ENCODE measurements at regions of chr6 and their contacts with region 1.

Region 1: DNA sequence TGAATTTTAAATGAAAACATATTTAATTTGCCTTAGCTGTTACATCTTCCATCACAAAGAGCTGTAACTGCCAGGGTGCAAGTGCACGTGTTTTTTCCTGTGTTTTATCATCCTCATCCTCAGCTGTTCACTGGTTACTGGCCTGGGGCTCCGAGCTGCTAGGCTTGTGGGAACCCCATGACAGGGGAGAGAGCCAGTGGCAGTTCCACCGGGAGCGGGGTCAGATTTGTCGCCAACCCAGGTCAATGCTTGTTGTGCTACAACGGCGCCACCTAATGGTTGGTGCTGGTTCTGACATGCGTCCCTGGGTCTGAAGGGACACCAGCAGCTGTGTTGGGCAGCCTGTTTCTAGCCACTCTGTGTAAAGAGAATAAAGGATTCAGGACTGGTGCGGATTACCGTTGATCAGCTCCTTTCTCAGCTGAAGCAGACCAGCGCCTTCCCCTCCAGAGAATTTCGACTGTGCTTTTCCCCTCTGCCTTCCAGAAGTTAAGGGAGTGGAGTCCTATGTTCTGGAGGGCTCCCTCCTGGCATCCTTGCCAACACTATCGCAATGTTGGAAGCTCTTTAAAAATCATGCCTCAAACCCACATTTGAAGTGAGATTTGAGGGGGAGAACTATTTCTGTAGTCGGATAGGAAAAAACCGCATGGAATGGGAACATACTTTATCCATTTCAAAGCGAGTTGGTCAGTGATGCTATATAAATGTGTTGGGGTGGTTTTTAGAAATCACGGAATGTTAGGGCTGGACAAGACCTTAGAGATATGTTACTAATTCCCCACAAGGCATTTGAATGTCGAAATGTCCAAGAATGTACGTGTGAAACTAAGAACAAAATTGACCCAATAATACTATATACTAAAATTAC is 32.1 kb downstream of the SUMO4 start:
- DNase-seq: peak; percentile 95
- H3K4me3 Mint-ChIP-seq: no peak overlapping the region
- H3K27ac Mint-ChIP-seq: peak overlapping the region; percentile 58
- H3K4me1 Mint-ChIP-seq: peaks cover 5% of the 10 kb centered on the region
- H3K27me3 Mint-ChIP-seq: no peaks in the 10 kb centered on the region

Region 2: DNA sequence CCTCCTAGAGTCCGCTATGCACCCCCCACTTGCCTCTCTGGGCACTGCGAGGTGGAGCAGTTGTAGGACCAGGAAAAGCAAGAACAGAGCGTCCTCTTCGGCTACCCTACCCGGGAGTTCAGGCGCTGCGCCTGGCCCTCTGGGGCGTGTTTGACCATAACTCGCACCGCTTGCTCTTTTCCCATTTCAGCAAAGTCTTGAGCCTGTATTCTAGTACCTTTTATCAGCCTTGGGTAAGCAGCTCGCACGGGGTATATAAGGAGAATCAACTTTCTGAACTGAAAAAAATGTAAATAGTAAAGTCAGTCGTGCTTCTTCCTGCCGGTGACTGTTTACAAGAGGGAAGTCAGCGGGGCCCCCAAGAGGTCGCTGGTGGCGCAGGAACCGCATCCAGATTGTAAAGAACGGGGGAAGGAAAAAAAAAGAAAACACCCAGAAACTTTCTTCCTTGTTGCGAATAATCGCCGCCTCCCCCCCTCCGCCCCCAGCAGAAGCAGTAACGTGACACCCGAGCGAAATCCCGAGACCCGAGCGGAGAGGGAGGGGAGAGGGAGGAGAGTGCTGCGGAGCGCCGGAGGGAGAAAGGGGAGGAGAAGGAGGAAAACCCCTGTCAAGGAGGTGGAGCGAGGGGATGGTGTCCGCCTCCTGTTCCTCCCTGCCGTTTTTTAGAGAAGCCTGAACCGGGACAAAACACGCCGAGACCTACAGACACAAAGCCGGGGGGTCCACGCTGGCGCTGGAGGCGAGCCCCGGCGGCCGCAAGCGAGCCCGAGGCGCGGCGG is 685.6 kb before region 1 on chr6 and contains the start of gene UST:
- CTCF ChIA-PET with region 1: no interaction called
- POLR2A ChIA-PET with region 1: no interaction called
- intact Hi-C with region 1: loop called (anchors 5 kb)
- DNase-seq: peak; percentile 79
- H3K4me3 Mint-ChIP-seq: peak within 1 kb of the TSS; percentile 88
- H3K27ac Mint-ChIP-seq: peak within 1 kb of the TSS; percentile 78
- H3K4me1 Mint-ChIP-seq: peaks cover 28% of the 10 kb centered on the region
- H3K27me3 Mint-ChIP-seq: peaks cover 8% of the 10 kb centered on the region
- total RNA-seq, gene UST: 3.7 to 4.9 TPM

Region 3: DNA sequence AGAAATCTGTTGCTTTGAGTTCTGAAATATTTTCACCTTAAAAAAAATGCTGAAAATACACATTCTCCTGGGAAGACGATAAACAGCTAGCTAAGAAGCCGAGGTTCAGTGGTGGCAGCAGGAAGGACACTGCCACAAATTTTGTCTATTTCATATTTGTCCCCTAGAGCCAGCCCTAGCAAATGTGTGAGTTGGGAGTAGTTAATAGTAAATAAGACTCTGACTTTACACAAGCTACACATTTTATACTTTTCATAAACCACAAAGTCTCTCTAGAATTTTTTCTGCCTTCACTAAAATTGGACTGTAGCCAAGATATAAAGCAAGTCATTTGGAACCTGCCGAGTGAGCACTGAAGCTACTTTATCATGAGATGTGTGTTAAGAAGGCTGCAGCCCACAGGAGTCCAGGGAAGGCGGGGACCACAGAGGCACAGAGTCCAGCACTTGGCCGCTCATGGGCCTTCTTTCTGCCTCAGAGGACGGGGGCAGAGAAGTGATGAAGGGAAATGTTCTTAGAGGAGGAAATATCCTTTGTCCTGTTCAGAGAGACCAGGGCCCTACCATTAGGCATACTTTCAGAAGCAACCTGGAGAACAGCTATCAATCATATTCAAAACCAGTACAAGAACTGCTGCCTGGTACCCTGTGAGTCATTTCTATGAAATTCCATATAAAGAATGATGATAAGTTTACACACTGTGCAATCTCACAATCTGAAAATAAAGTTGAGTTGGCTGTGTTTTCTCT is 356.4 kb before region 1 on chr6:
- CTCF ChIA-PET with region 1: interaction called, 29 read pairs
- POLR2A ChIA-PET with region 1: no interaction called
- intact Hi-C with region 1: no loop called
- DNase-seq: peak; percentile 51
- H3K4me3 Mint-ChIP-seq: peak overlapping the region; percentile 7
- H3K27ac Mint-ChIP-seq: peak overlapping the region; percentile 93
- H3K4me1 Mint-ChIP-seq: peaks cover 40% of the 10 kb centered on the region
- H3K27me3 Mint-ChIP-seq: no peaks in the 10 kb centered on the region

Region 4: DNA sequence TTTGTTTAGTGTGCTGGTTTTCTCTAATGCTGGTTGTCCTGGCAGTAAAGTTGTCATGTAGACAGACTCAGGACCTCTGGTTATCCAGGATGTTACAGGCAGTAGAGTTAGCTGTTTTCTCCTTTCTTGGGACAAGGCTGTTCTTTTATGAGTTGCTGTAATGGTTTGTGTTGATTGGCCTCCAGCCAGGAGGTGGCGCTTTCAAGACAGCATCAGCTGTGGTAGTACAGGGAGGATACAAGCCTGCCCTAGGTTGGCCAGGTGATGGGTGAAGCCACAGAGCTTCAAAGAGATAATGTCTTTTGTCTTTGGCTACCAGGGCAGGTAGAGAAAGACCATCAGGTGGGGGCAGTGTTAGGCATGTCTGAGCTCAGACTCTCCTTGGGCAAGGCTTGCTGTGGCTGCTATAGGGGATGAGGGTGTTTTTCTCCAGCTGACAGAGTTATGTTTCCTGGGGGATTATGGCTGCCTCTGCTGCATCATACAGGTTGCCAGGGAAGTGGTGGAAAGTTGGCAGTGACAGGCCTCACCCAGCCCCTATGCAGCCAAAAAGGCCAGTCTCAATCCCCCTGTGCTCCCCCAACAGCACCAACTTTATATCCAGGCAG is 241.8 kb before region 1 on chr6:
- CTCF ChIA-PET with region 1: interaction called, 21 read pairs
- POLR2A ChIA-PET with region 1: no interaction called
- intact Hi-C with region 1: loop called (anchors 1 kb)
- DNase-seq: peak; percentile 84
- H3K4me3 Mint-ChIP-seq: no peak overlapping the region
- H3K27ac Mint-ChIP-seq: peak overlapping the region; percentile 16
- H3K4me1 Mint-ChIP-seq: peaks cover 41% of the 10 kb centered on the region
- H3K27me3 Mint-ChIP-seq: no peaks in the 10 kb centered on the region

Region 5: DNA sequence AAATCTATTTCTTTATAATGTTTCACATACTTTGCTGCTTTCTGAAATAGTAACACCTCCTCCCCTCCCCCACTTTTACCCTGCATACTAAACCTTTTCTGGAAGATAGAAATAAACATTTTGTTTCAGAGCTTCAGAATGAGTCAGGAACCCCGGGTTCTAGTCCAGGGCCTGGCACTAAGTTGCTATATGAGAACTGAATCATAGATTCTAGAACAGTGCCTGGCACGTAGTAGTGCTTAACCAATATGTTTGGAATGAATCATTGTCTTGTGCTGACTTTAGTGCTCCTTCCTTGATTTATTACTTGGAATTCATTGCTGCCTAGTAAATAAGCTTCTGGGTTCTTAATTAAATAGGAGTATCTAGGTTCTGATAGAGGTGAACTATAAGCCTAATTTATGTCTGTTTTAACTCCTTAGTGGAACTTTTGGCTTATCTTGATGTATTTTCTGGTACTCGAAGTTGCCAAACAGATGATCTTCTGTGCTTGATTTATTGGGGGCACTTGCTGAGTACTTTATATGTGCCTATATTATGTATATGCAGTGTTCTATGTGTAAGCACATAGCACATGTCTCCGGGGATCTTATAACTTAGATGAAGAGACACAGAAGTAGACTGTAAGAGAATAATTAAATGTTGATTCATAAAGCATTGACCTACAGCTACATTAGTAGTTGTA is 96.1 kb before region 1 on chr6:
- CTCF ChIA-PET with region 1: interaction called, 13 read pairs
- POLR2A ChIA-PET with region 1: no interaction called
- intact Hi-C with region 1: no loop called
- DNase-seq: peak; percentile 75
- H3K4me3 Mint-ChIP-seq: peak overlapping the region; percentile 62
- H3K27ac Mint-ChIP-seq: peak overlapping the region; percentile 95
- H3K4me1 Mint-ChIP-seq: peaks cover 86% of the 10 kb centered on the region
- H3K27me3 Mint-ChIP-seq: no peaks in the 10 kb centered on the region

Region 6: DNA sequence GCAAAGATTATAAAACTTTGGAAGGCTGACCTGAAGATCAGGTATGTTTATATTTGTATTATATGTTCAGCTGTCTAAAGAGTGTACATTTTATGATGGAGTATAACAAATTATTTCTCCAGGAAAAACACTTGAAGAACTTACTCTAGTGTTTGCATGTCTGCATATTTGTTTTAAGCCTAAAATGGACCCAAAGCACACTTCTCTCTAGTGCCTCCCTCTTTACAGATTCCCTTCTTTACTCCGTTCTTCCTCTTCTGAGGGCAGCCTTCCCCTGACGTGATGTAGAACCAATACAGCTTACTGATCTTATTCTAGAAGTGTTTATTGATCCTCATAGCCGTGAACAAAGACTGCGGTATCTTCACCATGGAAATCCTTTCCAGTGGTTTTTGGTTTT is 18.1 kb before region 1 on chr6:
- CTCF ChIA-PET with region 1: interaction called, 36 read pairs
- POLR2A ChIA-PET with region 1: no interaction called
- intact Hi-C with region 1: no loop called
- DNase-seq: no peak
- H3K4me3 Mint-ChIP-seq: no peak overlapping the region
- H3K27ac Mint-ChIP-seq: no peak overlapping the region
- H3K4me1 Mint-ChIP-seq: peaks cover 12% of the 10 kb centered on the region
- H3K27me3 Mint-ChIP-seq: no peaks in the 10 kb centered on the region

Region 7: GRCh38 chr6:150153542-150153876 is 721.4 kb after region 1 on chr6:
- CTCF ChIA-PET with region 1: no interaction called
- POLR2A ChIA-PET with region 1: no interaction called
- intact Hi-C with region 1: no loop called
- DNase-seq: no peak
- H3K4me3 Mint-ChIP-seq: no peak overlapping the region
- H3K27ac Mint-ChIP-seq: no peak overlapping the region
- H3K4me1 Mint-ChIP-seq: peaks cover 22% of the 10 kb centered on the region
- H3K27me3 Mint-ChIP-seq: peaks cover 49% of the 10 kb centered on the region

Region 8: GRCh38 chr6:151112130-151112529 is 1680.0 kb after region 1 on chr6:
- CTCF ChIA-PET with region 1: no interaction called
- POLR2A ChIA-PET with region 1: no interaction called
- intact Hi-C with region 1: no loop called
- DNase-seq: no peak
- H3K4me3 Mint-ChIP-seq: no peak overlapping the region
- H3K27ac Mint-ChIP-seq: no peak overlapping the region
- H3K4me1 Mint-ChIP-seq: no peaks in the 10 kb centered on the region
- H3K27me3 Mint-ChIP-seq: peaks cover 3% of the 10 kb centered on the region